ENCODE measurements at regions of chr10 and their contacts with region 1.

Region 1: DNA sequence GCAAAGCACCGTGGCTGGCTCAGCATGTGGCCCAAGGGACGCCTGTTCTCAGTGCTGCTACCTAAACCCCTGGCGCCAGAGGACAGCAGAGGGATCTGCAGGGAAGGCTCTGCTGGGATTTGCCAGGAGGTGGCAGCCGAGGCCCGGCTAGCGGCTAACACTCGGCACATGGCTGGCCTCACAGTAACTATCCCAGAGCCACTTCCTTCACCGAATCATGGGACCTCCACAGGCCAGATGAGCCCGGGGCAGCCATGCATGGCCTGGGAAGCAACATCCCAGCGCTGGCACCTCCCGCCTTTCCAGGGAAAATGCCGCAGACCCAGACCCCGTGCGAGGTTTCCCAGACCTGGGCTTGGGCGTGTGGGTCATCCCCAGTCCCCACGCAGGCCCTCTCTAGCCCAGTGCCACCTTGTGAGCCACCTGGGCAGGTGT is 36.4 kb downstream of the DPYSL4 start:
- DNase-seq: peak; percentile 76 to 98 (median 88)

Region 2: GRCh38 chr10:132331526-132332432 is 108.6 kb after region 1 on chr10 and contains the start of gene LRRC27:
- intact Hi-C with region 1: loop called (anchors 5 kb)
- DNase-seq: peak; percentile 92 to 99 (median 96)

Region 3: GRCh38 chr10:132351611-132352010 is 128.4 kb after region 1 on chr10:
- intact Hi-C with region 1: loop called (anchors 1 kb)
- DNase-seq: peak in 3 of 10 donors; percentile 59 to 73 (median 72)

Region 4: GRCh38 chr10:132452631-132453469 is 229.7 kb after region 1 on chr10:
- intact Hi-C with region 1: loop called (anchors 1 kb)
- DNase-seq: peak in 9 of 10 donors; percentile 55 to 95 (median 69)

Region 5: DNA sequence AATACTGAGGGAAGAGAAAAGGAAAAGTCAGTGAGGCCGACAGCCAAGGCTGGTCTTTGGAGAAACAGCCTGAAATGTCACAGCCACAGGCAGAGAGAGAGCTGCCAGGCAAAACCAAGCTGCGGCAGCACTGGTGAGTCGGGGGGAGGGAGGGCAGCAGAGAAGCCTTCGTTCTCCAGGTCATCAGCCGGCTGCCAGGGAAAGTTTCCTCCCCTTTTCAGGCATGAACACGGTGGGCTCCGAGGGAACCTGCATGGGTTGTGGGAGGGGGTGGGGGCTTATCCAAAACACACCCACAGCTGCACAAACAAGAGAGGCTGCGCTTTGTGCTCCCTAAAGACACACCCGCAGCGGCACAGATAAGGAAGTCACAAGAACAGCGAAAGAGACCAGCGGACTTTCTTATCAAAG is 625.1 kb after region 1 on chr10:
- intact Hi-C with region 1: no loop called
- DNase-seq: peak in 2 of 10 donors; percentile 22 to 76